Activated CD4-positive, alpha-beta memory T cell treated with anti-CD3 and anti-CD28 coated beads, Interleukin-2, amount 10 ng/mL, durations not matched to agents 7 days and 5 days (primary cell): ENCODE measurements at regions of chr2 and their contacts with region 1.

Region 1: GRCh38 chr2:148644883-148645538 is 460 bp downstream of the EPC2 start:
- DNase-seq: peak; percentile 95
- H3K4me3 Mint-ChIP-seq: peak overlapping the region; percentile 84
- H3K27ac Mint-ChIP-seq: peak overlapping the region; percentile 89
- H3K4me1 Mint-ChIP-seq: peaks cover 37% of the 10 kb centered on the region
- H3K27me3 Mint-ChIP-seq: peaks cover 30% of the 10 kb centered on the region

Region 2: GRCh38 chr2:148020111-148021058 is 624.6 kb before region 1 on chr2 and contains the start of gene ORC4:
- CTCF ChIA-PET with region 1: interaction called, 5 read pairs
- POLR2A ChIA-PET with region 1: interaction called, 12 read pairs
- DNase-seq: peak; percentile 98
- H3K4me3 Mint-ChIP-seq: peak within 1 kb of the TSS; percentile 99
- H3K27ac Mint-ChIP-seq: peak within 1 kb of the TSS; percentile 95
- H3K4me1 Mint-ChIP-seq: peaks cover 52% of the 10 kb centered on the region
- H3K27me3 Mint-ChIP-seq: no peaks in the 10 kb centered on the region
- total RNA-seq, gene ORC4: 28.5 to 29.7 TPM

Region 3: DNA sequence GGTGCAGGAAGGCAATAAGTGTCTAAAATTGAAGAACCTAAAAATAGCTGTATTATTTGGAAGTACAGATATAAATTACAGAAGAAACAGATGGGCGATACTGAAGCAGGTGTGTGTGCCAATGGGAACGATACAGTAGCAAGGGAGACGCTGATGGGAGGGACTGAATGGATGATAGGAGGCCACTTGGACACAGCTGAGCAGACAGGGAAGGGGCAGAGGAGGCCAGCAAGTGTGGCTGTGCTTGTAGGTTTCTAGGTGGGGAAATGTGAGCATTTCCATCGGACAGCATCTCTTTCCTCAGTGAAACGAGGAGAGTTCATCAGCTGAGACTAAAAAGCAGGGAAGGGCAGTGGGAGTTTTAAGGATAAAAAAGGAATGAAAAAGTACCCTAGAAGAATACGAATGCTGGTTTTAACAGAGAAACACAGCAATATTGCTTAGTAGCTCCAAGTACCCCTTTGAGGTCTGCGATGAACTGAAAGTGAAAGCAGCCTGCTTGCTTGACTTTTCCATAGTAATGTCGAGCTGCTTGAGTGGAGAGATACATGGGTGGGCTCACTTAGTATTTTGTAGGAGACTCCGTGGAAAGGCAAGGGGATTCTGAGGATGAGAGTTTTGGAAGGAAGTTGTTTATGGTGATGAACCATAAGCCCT is 92.2 kb before region 1 on chr2:
- CTCF ChIA-PET with region 1: no interaction called
- POLR2A ChIA-PET with region 1: interaction called, 10 read pairs
- DNase-seq: peak; percentile 45
- H3K4me3 Mint-ChIP-seq: no peak overlapping the region
- H3K27ac Mint-ChIP-seq: no peak overlapping the region
- H3K4me1 Mint-ChIP-seq: peaks cover 1% of the 10 kb centered on the region
- H3K27me3 Mint-ChIP-seq: no peaks in the 10 kb centered on the region

Region 4: GRCh38 chr2:148603562-148603920 is 41.5 kb before region 1 on chr2:
- CTCF ChIA-PET with region 1: interaction called, 3 read pairs
- POLR2A ChIA-PET with region 1: interaction called, 13 read pairs
- DNase-seq: peak; percentile 22
- H3K4me3 Mint-ChIP-seq: peak overlapping the region; percentile 31
- H3K27ac Mint-ChIP-seq: peak overlapping the region; percentile 23
- H3K4me1 Mint-ChIP-seq: peaks cover 13% of the 10 kb centered on the region
- H3K27me3 Mint-ChIP-seq: peaks cover 36% of the 10 kb centered on the region

Region 5: GRCh38 chr2:148658807-148659722 is 14.1 kb after region 1 on chr2:
- CTCF ChIA-PET with region 1: interaction called, 6 read pairs
- POLR2A ChIA-PET with region 1: interaction called, 23 read pairs
- DNase-seq: no peak
- H3K4me3 Mint-ChIP-seq: peak overlapping the region; percentile 46
- H3K27ac Mint-ChIP-seq: peak overlapping the region; percentile 81
- H3K4me1 Mint-ChIP-seq: peaks cover 58% of the 10 kb centered on the region
- H3K27me3 Mint-ChIP-seq: no peaks in the 10 kb centered on the region

Region 6: GRCh38 chr2:148874868-148875341 is 229.9 kb after region 1 on chr2 and contains the start of gene KIF5C:
- CTCF ChIA-PET with region 1: interaction called, 3 read pairs
- POLR2A ChIA-PET with region 1: interaction called, 12 read pairs
- DNase-seq: peak; percentile 92
- H3K4me3 Mint-ChIP-seq: peak within 1 kb of the TSS; percentile 85
- H3K27ac Mint-ChIP-seq: peak within 1 kb of the TSS; percentile 54
- H3K4me1 Mint-ChIP-seq: peaks cover 21% of the 10 kb centered on the region
- H3K27me3 Mint-ChIP-seq: peaks cover 23% of the 10 kb centered on the region
- total RNA-seq, gene KIF5C: 14.7 to 21.7 TPM